CD4-positive, alpha-beta T cell (primary cell): ENCODE measurements at regions of chr1 and their contacts with region 1.

Region 1: DNA sequence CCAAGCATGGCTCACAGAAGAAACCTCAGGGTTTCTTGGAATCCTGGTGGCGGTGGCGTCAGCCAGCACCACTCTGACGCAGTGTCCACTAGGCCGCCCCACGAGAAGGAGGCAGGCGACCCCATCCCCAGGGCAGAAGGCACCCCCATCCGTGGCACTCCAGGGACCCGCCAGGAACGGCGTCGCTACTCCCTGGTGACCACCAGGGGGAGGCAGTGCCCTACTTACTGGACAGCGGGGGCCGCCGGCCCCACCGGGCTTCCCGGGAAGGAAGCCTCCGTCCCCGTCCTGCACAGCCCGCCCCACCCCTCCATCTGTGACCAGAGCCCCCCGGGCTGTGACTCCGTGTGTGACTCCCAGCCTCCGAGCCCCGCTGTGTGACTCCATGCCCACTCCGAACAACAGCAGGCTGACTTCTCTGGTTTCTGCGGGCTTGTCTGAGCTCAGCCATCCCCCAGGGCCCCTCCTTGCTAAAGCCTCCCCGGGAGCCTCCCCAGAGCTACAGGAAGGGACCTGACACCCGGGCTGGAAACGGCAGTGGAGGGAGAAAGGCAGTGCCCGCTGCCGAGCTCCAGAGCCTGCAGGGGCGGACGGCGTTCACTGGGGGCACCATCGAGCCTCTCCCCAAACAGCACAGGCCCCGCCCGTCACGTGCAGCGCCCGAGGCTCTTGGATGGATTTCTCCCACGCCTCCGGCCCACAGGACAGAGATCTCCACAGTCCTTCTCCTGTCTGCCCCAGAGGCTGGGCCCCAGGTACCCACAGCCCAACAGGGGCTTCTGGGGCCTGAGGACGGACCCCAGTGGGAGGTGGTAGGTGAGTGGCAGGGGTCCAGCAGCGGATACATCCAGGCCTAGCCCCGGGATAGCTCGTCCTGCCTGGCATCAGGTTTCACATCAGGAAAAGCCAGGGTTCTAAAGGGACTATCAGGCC is 21.1 kb downstream of the KIF17 start:
- DNase-seq: peak; percentile 54 to 85 (median 65)
- ATAC-seq: peak; percentile 98
- H3K4me3 ChIP-seq: peak overlapping the region; percentile 86
- H3K4me3 Mint-ChIP-seq: peak overlapping the region; percentile 91
- H3K27ac ChIP-seq: no peak overlapping the region
- H3K27ac Mint-ChIP-seq: no peak overlapping the region
- H3K4me1 ChIP-seq: peaks cover 13% of the 10 kb centered on the region
- H3K4me1 Mint-ChIP-seq: peaks cover 5% of the 10 kb centered on the region
- H3K27me3 ChIP-seq: no peaks in the 10 kb centered on the region
- H3K27me3 Mint-ChIP-seq: no peaks in the 10 kb centered on the region
- CTCF ChIP-seq: peak; percentile 99

Region 2: GRCh38 chr1:20290624-20291597 is 405.8 kb before region 1 on chr1 and contains the start of gene VWA5B1:
- CTCF ChIA-PET with region 1: no interaction called
- POLR2A ChIA-PET with region 1: no interaction called
- intact Hi-C with region 1: no loop called
- DNase-seq: no peak
- ATAC-seq: no peak
- H3K4me3 ChIP-seq: peak within 1 kb of the TSS; percentile 7
- H3K4me3 Mint-ChIP-seq: no peak within 1 kb of the TSS
- H3K27ac ChIP-seq: no peak within 1 kb of the TSS
- H3K27ac Mint-ChIP-seq: no peak within 1 kb of the TSS
- H3K4me1 ChIP-seq: peaks cover 12% of the 10 kb centered on the region
- H3K4me1 Mint-ChIP-seq: peaks cover 9% of the 10 kb centered on the region
- H3K27me3 ChIP-seq: peaks cover 27 to 28% of the 10 kb centered on the region in 2 experiments
- H3K27me3 Mint-ChIP-seq: peaks cover 84% of the 10 kb centered on the region
- CTCF ChIP-seq: no peak
- total RNA-seq, gene VWA5B1: 0.08 TPM

Region 3: DNA sequence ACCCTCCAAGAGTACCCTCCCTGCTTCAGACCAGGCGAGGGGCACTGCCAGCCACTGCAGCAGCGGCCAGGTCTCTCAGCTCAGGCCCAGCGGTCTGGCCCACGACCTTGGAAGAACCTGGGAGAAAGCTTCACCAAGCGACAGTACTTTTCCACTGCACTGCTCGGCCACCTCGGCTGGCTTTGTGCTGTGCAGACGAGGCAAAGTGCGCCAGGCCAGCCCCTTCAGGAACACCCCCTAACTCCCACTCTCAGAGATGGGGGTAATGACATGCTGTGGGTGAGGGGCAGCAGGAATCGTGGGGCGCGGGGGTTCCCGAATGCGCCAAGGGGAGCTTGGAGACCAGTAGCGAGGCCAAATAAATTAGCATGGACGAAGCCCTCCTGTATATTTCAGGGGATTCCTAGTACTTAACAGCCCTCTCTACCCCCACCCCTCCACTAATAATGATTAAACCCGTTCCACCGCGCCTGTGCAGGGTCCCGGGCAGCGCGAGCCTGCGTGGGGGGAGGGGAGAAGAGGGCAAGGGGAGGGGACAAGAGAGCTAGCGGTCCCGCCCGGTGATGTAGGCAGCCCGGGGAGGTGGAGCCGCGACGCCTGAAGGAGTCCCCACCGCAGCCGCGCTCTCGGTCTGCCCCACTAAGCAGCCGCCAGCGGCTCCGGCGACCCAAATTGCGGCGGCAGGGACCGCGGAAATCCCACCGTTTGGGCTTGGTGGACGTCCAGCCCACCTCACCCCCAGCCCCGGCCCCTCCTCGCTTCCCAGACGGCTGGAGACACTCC is 144.5 kb before region 1 on chr1 and contains the start of gene FAM43B:
- CTCF ChIA-PET with region 1: no interaction called
- POLR2A ChIA-PET with region 1: no interaction called
- intact Hi-C with region 1: no loop called
- DNase-seq: no peak
- ATAC-seq: no peak
- H3K4me3 ChIP-seq: no peak within 1 kb of the TSS
- H3K4me3 Mint-ChIP-seq: no peak within 1 kb of the TSS
- H3K27ac ChIP-seq: no peak within 1 kb of the TSS
- H3K27ac Mint-ChIP-seq: no peak within 1 kb of the TSS
- H3K4me1 ChIP-seq: no peaks in the 10 kb centered on the region
- H3K4me1 Mint-ChIP-seq: no peaks in the 10 kb centered on the region
- H3K27me3 ChIP-seq: peaks cover 31 to 50% of the 10 kb centered on the region in 2 experiments
- H3K27me3 Mint-ChIP-seq: peaks cover 41% of the 10 kb centered on the region
- CTCF ChIP-seq: no peak
- total RNA-seq, gene FAM43B: not detected

Region 4: GRCh38 chr1:20732588-20733360 is 36.1 kb after region 1 on chr1 and contains the start of gene SH2D5:
- CTCF ChIA-PET with region 1: interaction called, 7 read pairs
- POLR2A ChIA-PET with region 1: interaction called, 3 read pairs
- intact Hi-C with region 1: loop called (anchors 1 to 2 kb)
- DNase-seq: peak; percentile 36 to 89 (median 59)
- ATAC-seq: peak; percentile 78
- H3K4me3 ChIP-seq: peak within 1 kb of the TSS; percentile 66
- H3K4me3 Mint-ChIP-seq: peak within 1 kb of the TSS; percentile 90
- H3K27ac ChIP-seq: no peak within 1 kb of the TSS
- H3K27ac Mint-ChIP-seq: peak within 1 kb of the TSS; percentile 29
- H3K4me1 ChIP-seq: peaks cover 32% of the 10 kb centered on the region
- H3K4me1 Mint-ChIP-seq: peaks cover 16% of the 10 kb centered on the region
- H3K27me3 ChIP-seq: peaks cover 24 to 30% of the 10 kb centered on the region in 2 experiments
- H3K27me3 Mint-ChIP-seq: peaks cover 33% of the 10 kb centered on the region
- CTCF ChIP-seq: peak; percentile 30
- total RNA-seq, gene SH2D5: 0.08 TPM in 1 of 2 experiments, not detected in the other

Region 5: GRCh38 chr1:20896871-20897223 is 200.2 kb after region 1 on chr1:
- CTCF ChIA-PET with region 1: no interaction called
- POLR2A ChIA-PET with region 1: no interaction called
- intact Hi-C with region 1: loop called in 1 of 2 experiments (anchors 10 kb)
- DNase-seq: no peak
- ATAC-seq: no peak
- H3K4me3 ChIP-seq: no peak overlapping the region
- H3K4me3 Mint-ChIP-seq: no peak overlapping the region
- H3K27ac ChIP-seq: no peak overlapping the region
- H3K27ac Mint-ChIP-seq: no peak overlapping the region
- H3K4me1 ChIP-seq: no peaks in the 10 kb centered on the region
- H3K4me1 Mint-ChIP-seq: no peaks in the 10 kb centered on the region
- H3K27me3 ChIP-seq: no peaks in the 10 kb centered on the region
- H3K27me3 Mint-ChIP-seq: no peaks in the 10 kb centered on the region
- CTCF ChIP-seq: no peak

Region 6: GRCh38 chr1:20974069-20974468 is 277.4 kb after region 1 on chr1:
- CTCF ChIA-PET with region 1: no interaction called
- POLR2A ChIA-PET with region 1: no interaction called
- intact Hi-C with region 1: loop called in 1 of 2 experiments (anchors 10 kb)
- DNase-seq: no peak
- ATAC-seq: no peak
- H3K4me3 ChIP-seq: no peak overlapping the region
- H3K4me3 Mint-ChIP-seq: no peak overlapping the region
- H3K27ac ChIP-seq: no peak overlapping the region
- H3K27ac Mint-ChIP-seq: no peak overlapping the region
- H3K4me1 ChIP-seq: no peaks in the 10 kb centered on the region
- H3K4me1 Mint-ChIP-seq: no peaks in the 10 kb centered on the region
- H3K27me3 ChIP-seq: no peaks in the 10 kb centered on the region
- H3K27me3 Mint-ChIP-seq: no peaks in the 10 kb centered on the region
- CTCF ChIP-seq: no peak

Region 7: GRCh38 chr1:21200767-21201166 is 504.1 kb after region 1 on chr1:
- CTCF ChIA-PET with region 1: interaction called, 21 read pairs
- POLR2A ChIA-PET with region 1: no interaction called
- intact Hi-C with region 1: loop called in 1 of 2 experiments (anchors 1 kb)
- DNase-seq: no peak
- ATAC-seq: no peak
- H3K4me3 ChIP-seq: no peak overlapping the region
- H3K4me3 Mint-ChIP-seq: no peak overlapping the region
- H3K27ac ChIP-seq: no peak overlapping the region
- H3K27ac Mint-ChIP-seq: no peak overlapping the region
- H3K4me1 ChIP-seq: no peaks in the 10 kb centered on the region
- H3K4me1 Mint-ChIP-seq: no peaks in the 10 kb centered on the region
- H3K27me3 ChIP-seq: no peaks in the 10 kb centered on the region
- H3K27me3 Mint-ChIP-seq: peaks cover 5% of the 10 kb centered on the region
- CTCF ChIP-seq: no peak